ENCODE measurements at regions of chr13 and their contacts with region 1.

Region 1: GRCh38 chr13:110615322-110616102 is at the start of gene NAXD:
- DNase-seq: peak; percentile 93
- H3K4me3 Mint-ChIP-seq: peak within 1 kb of the TSS; percentile 94
- H3K27ac Mint-ChIP-seq: peak within 1 kb of the TSS; percentile 88
- H3K4me1 Mint-ChIP-seq: peaks cover 48% of the 10 kb centered on the region
- H3K27me3 Mint-ChIP-seq: no peaks in the 10 kb centered on the region
- total RNA-seq, gene NAXD: 22.6 to 22.9 TPM

Region 2: GRCh38 chr13:110561344-110562035 is 54.0 kb before region 1 on chr13 and contains the start of gene RAB20:
- CTCF ChIA-PET with region 1: no interaction called
- POLR2A ChIA-PET with region 1: no interaction called
- intact Hi-C with region 1: loop called (anchors 5 kb)
- DNase-seq: peak; percentile 64
- H3K4me3 Mint-ChIP-seq: peak within 1 kb of the TSS; percentile 86
- H3K27ac Mint-ChIP-seq: peak within 1 kb of the TSS; percentile 50
- H3K4me1 Mint-ChIP-seq: peaks cover 18% of the 10 kb centered on the region
- H3K27me3 Mint-ChIP-seq: peaks cover 4% of the 10 kb centered on the region
- total RNA-seq, gene RAB20: 1.4 to 2.1 TPM

Region 3: GRCh38 chr13:111153279-111153976 is 537.9 kb after region 1 on chr13:
- CTCF ChIA-PET with region 1: no interaction called
- POLR2A ChIA-PET with region 1: no interaction called
- intact Hi-C with region 1: loop called (anchors 10 kb)
- DNase-seq: peak; percentile 95
- H3K4me3 Mint-ChIP-seq: peak overlapping the region; percentile 87
- H3K27ac Mint-ChIP-seq: peak overlapping the region; percentile 89
- H3K4me1 Mint-ChIP-seq: peaks cover 28% of the 10 kb centered on the region
- H3K27me3 Mint-ChIP-seq: no peaks in the 10 kb centered on the region

Measured in activated CD4-positive, alpha-beta memory T cell treated with anti-CD3 and anti-CD28 coated beads for 36 hours (primary cell).